PC-3 (cell line): ENCODE measurements at regions of chr7 and their contacts with region 1.

Region 1: DNA sequence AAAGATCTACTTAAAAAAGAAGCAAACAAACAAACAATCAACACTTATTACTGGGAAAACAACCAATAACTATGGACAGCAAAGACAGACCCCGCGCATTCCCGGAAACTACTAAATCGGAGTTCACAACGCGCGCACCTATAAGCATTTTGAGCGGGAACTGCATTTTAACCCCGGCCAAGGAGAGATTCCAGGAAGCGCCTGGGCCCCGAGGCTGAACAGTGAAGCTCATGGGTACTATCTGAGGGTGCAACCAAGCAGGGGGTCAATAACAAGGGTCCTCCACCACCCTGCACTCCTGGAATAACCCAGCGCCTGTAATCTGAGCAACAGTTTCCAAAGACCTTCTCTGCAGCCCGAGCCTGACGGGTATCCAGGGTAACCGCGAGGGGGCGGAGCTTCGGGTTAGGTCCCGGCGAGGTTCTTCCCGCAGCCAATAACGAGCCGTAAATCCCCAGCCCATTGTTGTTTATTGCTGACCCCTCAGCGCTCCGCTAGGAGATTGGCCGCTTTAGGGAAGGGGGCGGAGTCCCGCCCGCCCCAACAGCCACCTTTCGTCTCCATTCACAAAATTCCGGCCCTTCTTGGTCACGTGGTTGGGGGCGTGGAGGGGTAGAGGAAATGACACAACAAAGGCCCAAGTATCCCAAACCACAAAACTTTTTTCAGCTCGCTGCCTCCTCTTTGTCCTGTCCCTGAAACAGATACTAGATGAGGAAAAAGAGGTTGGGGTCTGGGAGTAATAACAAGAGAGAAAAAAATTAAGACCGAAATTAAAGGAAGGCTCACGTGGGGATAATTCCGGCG is 1.7 kb upstream of the ETV1 start:
- DNase-seq: peak; percentile 98
- ATAC-seq: peak; percentile 74
- H3K4me3 ChIP-seq: peak overlapping the region; percentile 77
- H3K27ac ChIP-seq: peak overlapping the region; percentile 82
- H3K4me1 ChIP-seq: peaks cover 26% of the 10 kb centered on the region
- H3K27me3 ChIP-seq: no peaks in the 10 kb centered on the region
- CTCF ChIP-seq: no peak

Region 2: GRCh38 chr7:13524076-13524475 is 467.1 kb before region 1 on chr7:
- CTCF ChIA-PET with region 1: interaction called, 3 read pairs
- POLR2A ChIA-PET with region 1: interaction called, 5 read pairs
- intact Hi-C with region 1: loop called (anchors 2 kb)
- DNase-seq: no peak
- ATAC-seq: peak; percentile 60; the same call in 1 of the 2 replicates
- H3K4me3 ChIP-seq: no peak overlapping the region
- H3K27ac ChIP-seq: no peak overlapping the region
- H3K4me1 ChIP-seq: peaks cover 4% of the 10 kb centered on the region; the same call in 1 of the 2 replicates
- H3K27me3 ChIP-seq: no peaks in the 10 kb centered on the region
- CTCF ChIP-seq: no peak

Region 3: DNA sequence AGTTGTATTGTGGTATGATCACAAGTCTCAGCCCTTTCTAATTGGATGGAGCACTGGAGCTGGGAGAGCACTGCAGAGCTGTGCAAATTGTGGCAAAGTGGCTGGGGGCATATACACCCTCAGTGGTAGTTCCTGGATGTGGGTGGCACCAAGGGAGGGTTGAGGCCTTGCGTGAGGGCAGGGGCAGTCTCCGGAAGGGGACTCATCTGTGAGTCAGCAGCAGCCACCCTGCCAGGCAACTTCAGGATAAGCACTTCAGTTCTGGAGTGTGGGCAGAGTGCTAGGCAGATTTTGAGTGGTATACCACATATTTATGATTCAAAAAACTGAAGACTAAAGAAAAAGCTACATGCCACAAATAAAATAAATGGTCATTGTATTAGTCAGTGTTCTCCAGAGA is 212.2 kb before region 1 on chr7:
- CTCF ChIA-PET with region 1: no interaction called
- POLR2A ChIA-PET with region 1: no interaction called
- intact Hi-C with region 1: loop called (anchors 2 kb)
- DNase-seq: peak; percentile 92
- ATAC-seq: peak; percentile 95
- H3K4me3 ChIP-seq: no peak overlapping the region
- H3K27ac ChIP-seq: peak overlapping the region; percentile 95
- H3K4me1 ChIP-seq: peaks cover 26% of the 10 kb centered on the region
- H3K27me3 ChIP-seq: no peaks in the 10 kb centered on the region
- CTCF ChIP-seq: no peak

Region 4: GRCh38 chr7:13932131-13932530 is 59.1 kb before region 1 on chr7:
- CTCF ChIA-PET with region 1: no interaction called
- POLR2A ChIA-PET with region 1: no interaction called
- intact Hi-C with region 1: no loop called
- DNase-seq: no peak
- ATAC-seq: no peak
- H3K4me3 ChIP-seq: no peak overlapping the region
- H3K27ac ChIP-seq: no peak overlapping the region
- H3K4me1 ChIP-seq: no peaks in the 10 kb centered on the region
- H3K27me3 ChIP-seq: no peaks in the 10 kb centered on the region
- CTCF ChIP-seq: no peak

Region 5: GRCh38 chr7:13981070-13981469 is 10.1 kb before region 1 on chr7:
- CTCF ChIA-PET with region 1: no interaction called
- POLR2A ChIA-PET with region 1: interaction called, 36 read pairs
- intact Hi-C with region 1: loop called (anchors 1 kb)
- DNase-seq: peak; percentile 91
- ATAC-seq: peak; percentile 95
- H3K4me3 ChIP-seq: no peak overlapping the region; the same call in 1 of the 2 replicates
- H3K27ac ChIP-seq: peak overlapping the region; percentile 55
- H3K4me1 ChIP-seq: peaks cover 38% of the 10 kb centered on the region
- H3K27me3 ChIP-seq: no peaks in the 10 kb centered on the region
- CTCF ChIP-seq: no peak

Region 6: GRCh38 chr7:14233076-14233867 is 242.1 kb after region 1 on chr7:
- CTCF ChIA-PET with region 1: no interaction called
- POLR2A ChIA-PET with region 1: no interaction called
- intact Hi-C with region 1: loop called (anchors 10 kb)
- DNase-seq: peak; percentile 66
- ATAC-seq: peak; percentile 83
- H3K4me3 ChIP-seq: peak overlapping the region; percentile 33; the same call in 1 of the 2 replicates
- H3K27ac ChIP-seq: 0 out of 2 replicates have a peak overlapping the region, but pooled peaks have one; percentile 6
- H3K4me1 ChIP-seq: peaks cover 22% of the 10 kb centered on the region
- H3K27me3 ChIP-seq: no peaks in the 10 kb centered on the region
- CTCF ChIP-seq: no peak

Region 7: DNA sequence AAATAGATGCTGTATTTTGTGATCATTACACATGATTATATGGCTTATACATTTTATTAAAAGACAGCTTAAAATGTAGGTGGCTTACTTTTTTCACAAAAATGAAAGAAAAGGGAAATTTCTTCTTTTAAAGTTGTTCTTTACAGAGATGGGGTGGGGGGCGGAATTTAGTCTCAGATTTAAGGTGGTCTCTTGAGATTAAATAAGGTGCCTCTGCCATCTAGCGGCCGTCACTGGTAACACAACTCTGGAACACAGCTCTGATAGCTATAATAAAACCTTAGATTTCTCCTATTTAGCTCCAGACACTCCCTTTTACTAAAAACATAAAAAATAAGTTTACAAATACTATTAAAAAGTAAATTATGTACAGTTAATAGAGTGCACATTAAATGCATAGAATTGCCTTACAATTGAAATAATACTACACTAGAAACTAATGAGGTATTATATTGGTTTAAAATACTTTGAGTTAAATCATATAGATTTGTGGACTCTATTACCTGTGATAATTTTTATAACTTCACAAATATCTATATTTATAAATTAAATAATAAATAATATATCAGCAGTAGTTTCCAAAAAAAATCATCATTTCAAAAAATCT is 700.5 kb after region 1 on chr7:
- CTCF ChIA-PET with region 1: interaction called, 4 read pairs
- POLR2A ChIA-PET with region 1: no interaction called
- intact Hi-C with region 1: loop called (anchors 2 kb)
- DNase-seq: peak; percentile 57
- ATAC-seq: peak; percentile 29; the same call in 1 of the 2 replicates
- H3K4me3 ChIP-seq: no peak overlapping the region
- H3K27ac ChIP-seq: no peak overlapping the region
- H3K4me1 ChIP-seq: no peaks in the 10 kb centered on the region
- H3K27me3 ChIP-seq: no peaks in the 10 kb centered on the region
- CTCF ChIP-seq: peak; percentile 93